ENCODE measurements at regions of chr17 and their contacts with region 1.

Region 1: DNA sequence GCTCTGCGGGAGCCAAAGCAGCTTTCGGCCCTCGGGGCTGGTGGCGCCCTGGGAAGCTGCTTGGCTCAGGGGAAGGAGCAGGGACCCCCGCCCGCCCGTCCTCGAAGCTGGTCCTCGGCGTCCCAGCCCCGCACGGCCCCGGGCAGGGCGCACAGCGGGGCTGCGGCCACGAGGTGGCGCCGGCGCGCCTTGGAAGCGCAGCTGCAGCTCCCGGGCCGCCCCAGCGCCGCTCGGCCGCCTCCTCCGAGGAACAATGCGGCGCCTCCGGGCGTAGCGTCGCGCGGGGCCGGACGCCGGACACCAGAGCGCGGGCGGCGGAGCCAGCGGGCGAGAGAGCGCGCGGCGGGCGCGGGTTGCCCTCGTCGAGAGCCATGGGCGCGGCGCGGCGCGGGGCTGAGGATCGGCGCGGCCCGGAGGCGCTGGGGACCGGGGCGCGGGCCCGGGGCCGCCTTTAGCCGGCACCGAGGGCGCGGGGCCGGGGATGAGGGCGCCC is at the start of gene MGAT5B:
- DNase-seq: peak; percentile 70 to 84 (median 78)
- H3K4me3 ChIP-seq: peak within 1 kb of the TSS in 1 of 4 donors; percentile 55
- H3K27ac ChIP-seq: no peak within 1 kb of the TSS
- H3K4me1 ChIP-seq: no peaks in the 10 kb centered on the region
- H3K27me3 ChIP-seq: peaks cover 19% of the 10 kb centered on the region
- CTCF ChIP-seq: peak in 5 of 6 experiments; percentile 24 to 98 (median 89)
- POLR2A ChIP-seq: no peak
- total RNA-seq, gene MGAT5B: 0.26 to 0.83 (median 0.56) TPM in 8 of 9 donors, not detected in the other

Region 2: GRCh38 chr17:77054936-77055335 is 186.7 kb after region 1 on chr17:
- intact Hi-C with region 1: loop called (anchors 5 kb)
- DNase-seq: no peak
- H3K4me3 ChIP-seq: no peak overlapping the region
- H3K27ac ChIP-seq: no peak overlapping the region
- H3K4me1 ChIP-seq: no peaks in the 10 kb centered on the region
- H3K27me3 ChIP-seq: peaks cover 25% of the 10 kb centered on the region
- CTCF ChIP-seq: no peak
- POLR2A ChIP-seq: no peak

Region 3: GRCh38 chr17:77064598-77064997 is 196.4 kb after region 1 on chr17:
- intact Hi-C with region 1: loop called (anchors 2 to 5 kb)
- DNase-seq: no peak
- H3K4me3 ChIP-seq: no peak overlapping the region
- H3K27ac ChIP-seq: no peak overlapping the region
- H3K4me1 ChIP-seq: no peaks in the 10 kb centered on the region
- H3K27me3 ChIP-seq: peaks cover 26% of the 10 kb centered on the region
- CTCF ChIP-seq: no peak
- POLR2A ChIP-seq: no peak

Region 4: DNA sequence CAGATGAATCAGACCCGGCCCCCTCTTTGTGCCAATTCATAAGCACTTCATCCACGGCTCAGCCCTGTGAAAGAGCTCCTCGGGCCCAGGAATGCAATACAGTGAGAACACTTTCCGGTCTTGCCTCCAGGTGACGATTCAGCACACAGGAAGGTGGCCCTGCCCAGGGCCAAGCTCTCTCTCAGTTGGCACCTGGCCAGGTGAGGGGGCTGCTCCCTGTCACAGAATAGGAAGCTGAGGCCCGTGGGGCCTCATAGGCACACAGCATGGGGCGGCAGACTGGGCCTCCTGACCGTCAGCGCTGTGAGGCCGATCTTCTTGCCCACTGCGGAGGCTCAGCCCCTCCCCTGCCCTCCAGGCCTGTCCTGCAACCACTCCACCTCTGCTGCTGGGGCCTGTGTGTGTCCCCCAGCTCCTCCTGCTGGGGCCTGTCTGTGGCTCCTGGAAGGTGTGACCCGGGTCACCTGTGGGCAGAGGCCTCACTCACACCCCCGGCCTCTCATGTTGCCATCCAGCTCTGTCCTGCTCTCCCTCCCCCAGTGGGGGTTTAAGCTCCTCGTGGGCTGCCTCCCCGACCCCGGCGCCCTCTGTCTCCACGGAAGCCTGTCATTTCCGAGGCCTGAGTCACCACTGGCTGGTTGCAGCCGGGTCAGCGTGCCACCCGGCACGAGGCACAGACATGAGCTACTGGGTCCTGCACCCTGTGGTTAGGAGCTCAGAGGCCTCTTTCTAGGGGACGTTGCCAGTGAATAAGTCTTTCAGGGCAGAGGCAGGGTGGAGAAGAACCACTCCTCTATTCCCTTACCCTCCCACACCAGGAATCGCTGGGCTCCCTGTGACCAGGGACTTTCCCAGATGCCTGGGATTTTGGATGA is 387.0 kb after region 1 on chr17:
- intact Hi-C with region 1: loop called in 1 of 2 experiments (anchors 10 kb)
- DNase-seq: peak in 6 of 7 donors; percentile 60 to 77 (median 72)
- H3K4me3 ChIP-seq: no peak overlapping the region
- H3K27ac ChIP-seq: peak overlapping the region in 1 of 5 donors; percentile 24
- H3K4me1 ChIP-seq: peaks cover 0 to 5% of the 10 kb centered on the region in 2 donors
- H3K27me3 ChIP-seq: no peaks in the 10 kb centered on the region
- CTCF ChIP-seq: no peak
- POLR2A ChIP-seq: no peak

Measured in adrenal gland (tissue), 19 donors.